Activated naive CD4-positive, alpha-beta T cell treated with anti-CD3 and anti-CD28 coated beads, Interleukin-2, amount 10 ng/mL, durations not matched to agents 7 days and 5 days (primary cell): ENCODE measurements at regions of chr4 and their contacts with region 1.

Region 1: GRCh38 chr4:112284662-112285411 is 867 bp downstream of the TIFA start:
- DNase-seq: peak; percentile 35
- H3K4me3 Mint-ChIP-seq: peak overlapping the region; percentile 91
- H3K27ac Mint-ChIP-seq: peak overlapping the region; percentile 95
- H3K4me1 Mint-ChIP-seq: peaks cover 82% of the 10 kb centered on the region
- H3K27me3 Mint-ChIP-seq: no peaks in the 10 kb centered on the region

Region 2: DNA sequence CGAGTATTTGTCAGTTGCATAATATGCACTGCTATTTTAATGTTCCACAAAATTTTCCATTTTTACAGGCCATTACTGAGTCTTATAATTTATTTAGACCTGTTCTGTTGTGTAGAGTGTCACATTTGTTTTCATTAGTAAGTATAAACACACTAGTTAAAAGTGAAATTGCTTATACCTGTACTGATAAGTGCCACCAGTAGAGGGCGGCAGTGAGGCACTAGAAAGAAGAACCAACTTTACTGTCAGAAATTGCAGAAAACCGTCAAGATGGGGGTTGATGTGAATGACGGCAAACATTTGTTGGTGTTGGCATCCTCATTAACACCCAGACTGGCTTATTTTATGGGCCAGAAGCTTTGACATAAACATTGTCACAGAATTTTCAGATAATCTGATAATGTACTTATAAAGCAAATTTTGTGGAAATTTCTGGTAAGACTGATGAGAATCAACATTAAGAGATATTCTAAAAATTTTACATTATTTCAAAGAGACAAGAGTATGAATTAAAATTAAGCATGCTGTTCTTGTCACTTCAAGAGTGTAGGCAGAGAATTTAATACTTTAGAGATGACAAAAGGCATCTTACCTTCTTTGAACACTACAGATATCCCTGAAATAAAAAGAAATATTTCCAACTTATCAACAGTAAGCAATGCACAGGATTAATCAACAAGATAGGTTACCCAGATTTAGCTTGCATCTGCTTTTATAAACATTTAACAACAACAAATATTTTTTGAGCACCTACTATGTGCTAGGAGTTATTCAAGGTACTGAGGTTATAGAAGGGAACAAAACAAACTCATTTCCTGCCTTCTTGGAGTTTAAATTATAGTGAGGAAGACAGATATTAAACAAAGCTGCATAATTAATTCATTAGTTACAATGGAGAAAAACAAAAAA is 37.2 kb after region 1 on chr4:
- CTCF ChIA-PET with region 1: interaction called, 14 read pairs
- DNase-seq: peak; percentile 85
- H3K4me3 Mint-ChIP-seq: no peak overlapping the region
- H3K27ac Mint-ChIP-seq: no peak overlapping the region
- H3K4me1 Mint-ChIP-seq: peaks cover 10% of the 10 kb centered on the region
- H3K27me3 Mint-ChIP-seq: no peaks in the 10 kb centered on the region